Ascending aorta (tissue), 2 donors: ENCODE measurements at regions of chr10 and their contacts with region 1.

Region 1: DNA sequence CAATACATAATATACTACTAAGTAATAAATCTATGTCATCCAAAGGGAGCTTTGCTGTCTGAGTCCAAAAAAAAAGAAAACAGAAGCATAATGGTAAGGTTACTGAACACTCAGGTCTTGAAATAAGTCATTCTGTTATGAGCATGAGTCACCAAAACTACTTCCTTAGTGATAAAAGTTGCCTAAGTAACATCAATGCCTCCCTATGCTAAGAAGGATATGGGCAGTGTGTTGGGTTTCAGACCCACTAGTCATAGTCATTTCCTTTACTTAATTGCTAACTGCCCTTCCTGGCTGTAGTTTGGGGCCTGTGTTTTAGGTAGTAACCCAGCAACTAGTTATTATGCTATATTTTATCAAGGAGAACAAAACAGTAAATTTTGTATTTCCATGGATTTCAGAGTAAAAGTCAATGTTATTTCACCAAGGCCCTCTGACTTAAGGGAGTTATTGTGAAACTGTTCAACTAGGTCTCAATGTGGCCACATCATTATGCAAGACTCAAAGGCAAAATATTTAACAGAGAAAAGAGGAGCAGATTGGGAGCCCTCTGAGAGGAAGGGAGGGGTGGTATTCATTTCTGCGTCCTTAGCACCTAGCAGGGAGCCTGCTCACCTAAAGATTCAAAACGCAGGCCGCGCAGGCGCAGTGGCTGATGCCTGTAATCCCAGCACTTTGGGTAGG is 11.7 kb upstream of the VIM start:
- DNase-seq: peak; percentile 32 to 81
- H3K4me3 ChIP-seq: peak overlapping the region in 1 of 2 donors; percentile 20
- H3K27ac ChIP-seq: peak overlapping the region; percentile 89 to 93
- H3K4me1 ChIP-seq: peaks cover 6 to 50% of the 10 kb centered on the region in 2 donors
- H3K27me3 ChIP-seq: no peaks in the 10 kb centered on the region
- CTCF ChIP-seq: no peak

Region 2: GRCh38 chr10:17153296-17153695 is 63.1 kb before region 1 on chr10:
- intact Hi-C with region 1: loop called (anchors 5 kb)
- DNase-seq: no peak
- H3K4me3 ChIP-seq: no peak overlapping the region
- H3K27ac ChIP-seq: peak overlapping the region; percentile 71 to 89
- H3K4me1 ChIP-seq: peaks cover 0 to 32% of the 10 kb centered on the region in 2 donors
- H3K27me3 ChIP-seq: no peaks in the 10 kb centered on the region
- CTCF ChIP-seq: no peak

Region 3: DNA sequence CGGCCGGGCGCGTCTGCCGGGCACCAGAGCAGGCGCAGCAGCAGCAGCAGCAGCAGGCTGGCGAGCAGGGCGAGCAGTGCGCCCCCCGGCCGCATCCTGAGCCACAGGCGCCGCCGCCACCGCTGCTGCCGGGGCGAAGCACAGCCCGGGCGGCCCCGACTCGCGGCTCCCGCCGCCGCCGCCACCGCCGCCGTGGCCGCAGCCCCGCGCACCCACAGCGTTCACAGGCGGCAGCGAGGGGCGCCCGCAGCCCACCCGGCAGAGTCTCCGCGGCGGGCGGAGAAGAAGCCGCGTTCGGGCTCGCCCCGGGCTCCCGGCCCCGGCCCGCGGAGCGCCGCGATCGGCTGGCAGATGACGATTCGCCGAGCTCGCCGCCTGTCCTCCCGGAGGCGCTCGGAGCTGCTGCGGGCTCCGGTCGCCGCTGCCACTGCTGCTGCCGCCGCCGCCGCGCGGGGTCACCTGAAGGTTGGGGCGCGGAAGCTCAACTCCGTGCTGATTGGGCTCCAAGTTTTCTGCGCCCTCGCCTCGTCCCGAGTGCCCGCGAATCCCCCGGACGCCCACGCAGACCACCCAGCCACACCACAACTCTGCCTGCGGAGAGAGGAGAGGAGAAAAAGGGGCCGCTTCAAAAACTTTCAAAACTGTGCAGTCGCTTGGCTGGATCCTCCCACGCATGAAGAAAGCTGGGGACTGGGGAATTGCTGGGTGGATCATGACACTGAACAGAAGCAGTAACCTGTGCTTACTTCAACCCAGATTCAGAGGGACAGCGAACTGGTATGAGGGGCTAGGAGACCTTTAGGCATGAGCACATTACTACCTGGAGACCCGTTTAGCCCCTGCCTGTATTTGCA is 238.0 kb after region 1 on chr10 and contains the start of gene ST8SIA6:
- intact Hi-C with region 1: no loop called
- DNase-seq: no peak
- H3K4me3 ChIP-seq: peak within 1 kb of the TSS; percentile 58 to 70
- H3K27ac ChIP-seq: no peak within 1 kb of the TSS
- H3K4me1 ChIP-seq: peaks cover 5 to 6% of the 10 kb centered on the region in 2 donors
- H3K27me3 ChIP-seq: no peaks in the 10 kb centered on the region
- CTCF ChIP-seq: no peak
- total RNA-seq, gene ST8SIA6: not detected